ENCODE measurements at regions of chr1 and their contacts with region 1.

Region 1: GRCh38 chr1:76294482-76295194 is 220.1 kb downstream of the ST6GALNAC3 start:
- DNase-seq: no peak
- H3K4me3 Mint-ChIP-seq: peak overlapping the region; percentile 11
- H3K27ac Mint-ChIP-seq: peak overlapping the region; percentile 64
- H3K4me1 Mint-ChIP-seq: peaks cover 48% of the 10 kb centered on the region
- H3K27me3 Mint-ChIP-seq: no peaks in the 10 kb centered on the region

Region 2: DNA sequence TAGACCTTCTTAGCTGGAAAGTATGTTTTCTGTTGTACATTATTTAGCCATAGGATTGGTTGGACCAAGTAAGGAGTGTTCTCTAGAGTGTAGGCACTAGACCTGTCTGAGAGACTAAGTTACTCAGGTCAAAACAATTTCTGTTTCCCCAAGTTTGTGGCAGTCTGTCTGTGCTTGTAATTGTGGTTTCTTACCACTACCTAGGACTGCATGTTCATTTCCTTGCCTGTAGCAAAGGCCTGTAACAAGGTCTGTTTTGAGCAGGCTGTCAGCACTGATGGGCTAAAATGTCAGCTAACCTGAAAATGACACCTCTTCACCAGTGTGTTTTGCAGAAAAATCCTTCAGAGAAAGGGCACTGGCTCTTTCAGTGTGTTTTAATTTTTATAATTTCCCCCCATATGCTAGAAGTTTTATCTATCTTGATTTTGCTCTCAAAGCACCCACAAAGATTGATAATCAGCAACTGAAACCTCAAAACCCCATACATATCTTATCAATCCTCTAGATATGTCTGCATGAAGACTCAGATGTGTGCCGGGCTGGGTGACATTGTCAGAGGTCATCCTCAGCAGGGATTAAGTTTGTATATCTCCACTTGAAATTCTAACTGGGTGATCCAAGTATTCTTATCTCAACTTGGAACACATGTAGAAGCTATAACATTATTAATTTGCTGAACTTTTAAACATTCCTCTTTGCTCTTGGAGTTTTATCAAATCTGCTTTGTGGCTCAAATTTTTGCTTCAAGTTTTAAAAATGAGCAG is 270.8 kb before region 1 on chr1:
- intact Hi-C with region 1: loop called (anchors 10 kb)
- DNase-seq: peak; percentile 35
- H3K4me3 Mint-ChIP-seq: no peak overlapping the region
- H3K27ac Mint-ChIP-seq: peak overlapping the region; percentile 48
- H3K4me1 Mint-ChIP-seq: peaks cover 18% of the 10 kb centered on the region
- H3K27me3 Mint-ChIP-seq: peaks cover 53% of the 10 kb centered on the region

Region 3: GRCh38 chr1:76095802-76096201 is 198.8 kb before region 1 on chr1:
- intact Hi-C with region 1: no loop called
- DNase-seq: no peak
- H3K4me3 Mint-ChIP-seq: no peak overlapping the region
- H3K27ac Mint-ChIP-seq: no peak overlapping the region
- H3K4me1 Mint-ChIP-seq: no peaks in the 10 kb centered on the region
- H3K27me3 Mint-ChIP-seq: peaks cover 7% of the 10 kb centered on the region

Region 4: DNA sequence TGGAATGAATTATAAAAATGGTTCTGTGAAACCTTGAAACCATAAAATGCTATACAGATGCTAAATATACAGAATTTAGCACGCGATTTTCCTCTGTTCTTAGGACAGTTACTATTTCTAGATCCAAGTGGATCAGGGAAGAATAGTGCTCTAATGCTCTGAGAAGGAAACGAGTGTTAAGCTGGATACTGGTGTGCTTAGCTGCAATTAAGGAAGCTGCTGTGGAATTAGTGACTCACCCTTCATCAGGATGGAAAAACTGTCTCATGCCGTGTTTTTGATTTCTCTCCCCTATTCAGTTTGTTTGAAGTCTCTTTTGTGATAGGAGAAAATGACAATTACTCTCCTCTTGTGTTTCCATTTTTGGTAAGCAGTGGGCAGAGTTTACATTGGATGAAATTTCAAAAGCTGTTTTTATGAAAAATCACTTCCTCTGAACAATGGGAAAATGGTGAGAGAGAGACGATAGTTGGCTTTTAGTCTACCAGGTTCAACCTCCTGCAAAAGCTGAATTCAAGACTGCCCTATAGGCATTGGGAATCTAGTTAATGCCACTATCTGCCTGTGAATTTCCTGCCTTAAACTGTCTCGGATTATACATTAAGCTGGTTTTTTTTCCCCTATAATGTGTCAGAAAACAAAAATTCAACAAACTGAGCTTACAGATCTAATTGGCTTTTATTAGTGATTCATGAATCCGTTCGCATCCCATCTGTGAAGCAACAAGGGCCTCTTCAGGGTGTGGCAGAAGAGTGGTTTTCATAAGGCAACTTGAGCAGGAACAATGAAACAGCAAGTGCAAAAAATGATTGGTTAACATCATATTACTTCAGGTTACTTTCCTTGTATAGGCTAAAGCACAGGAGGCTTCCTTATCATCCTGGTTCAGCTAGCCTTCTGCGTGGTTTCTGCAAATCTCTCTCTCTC is 40.3 kb before region 1 on chr1:
- intact Hi-C with region 1: loop called (anchors 5 kb)
- DNase-seq: no peak
- H3K4me3 Mint-ChIP-seq: no peak overlapping the region
- H3K27ac Mint-ChIP-seq: peak overlapping the region; percentile 4
- H3K4me1 Mint-ChIP-seq: peaks cover 37% of the 10 kb centered on the region
- H3K27me3 Mint-ChIP-seq: no peaks in the 10 kb centered on the region

Region 5: GRCh38 chr1:76269155-76269554 is 25.5 kb before region 1 on chr1:
- intact Hi-C with region 1: loop called (anchors 1 kb)
- DNase-seq: no peak
- H3K4me3 Mint-ChIP-seq: peak overlapping the region; percentile 53
- H3K27ac Mint-ChIP-seq: no peak overlapping the region
- H3K4me1 Mint-ChIP-seq: peaks cover 55% of the 10 kb centered on the region
- H3K27me3 Mint-ChIP-seq: peaks cover 8% of the 10 kb centered on the region

Region 6: DNA sequence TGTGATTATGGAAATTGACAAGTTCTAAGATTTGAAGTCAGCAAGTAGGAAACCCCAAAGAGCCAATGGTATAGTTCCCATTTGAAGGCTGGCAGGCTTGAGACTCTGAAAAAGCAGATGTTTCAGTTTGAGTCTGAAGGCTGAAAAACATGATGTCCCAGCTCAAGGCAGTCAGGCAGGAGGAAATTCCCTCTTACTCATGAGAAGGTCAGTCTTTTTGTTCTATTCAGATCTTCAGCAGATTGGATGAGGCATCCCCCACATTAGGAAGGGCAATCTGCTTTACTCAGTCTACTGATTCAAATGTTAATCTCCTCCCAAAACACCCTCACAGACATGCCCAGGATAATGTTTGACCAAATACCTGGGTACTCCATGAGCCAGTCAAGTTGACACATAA is 200.2 kb after region 1 on chr1:
- intact Hi-C with region 1: loop called (anchors 5 kb)
- DNase-seq: no peak
- H3K4me3 Mint-ChIP-seq: peak overlapping the region; percentile 35
- H3K27ac Mint-ChIP-seq: peak overlapping the region; percentile 70
- H3K4me1 Mint-ChIP-seq: peaks cover 21% of the 10 kb centered on the region
- H3K27me3 Mint-ChIP-seq: peaks cover 3% of the 10 kb centered on the region

Measured in activated T-helper 2 cell treated with anti-CD3 and anti-CD28 coated beads, Interferon-gamma antibody, Interleukin-2, Interleukin-4, amounts not matched to agents 10 μg/mL and 5 μg/mL and 100 μg/mL, durations not matched to agents 14 hours and 24 hours and 36 hours (primary cell).